ENCODE measurements at regions of chr3 and their contacts with region 1.

Region 1: DNA sequence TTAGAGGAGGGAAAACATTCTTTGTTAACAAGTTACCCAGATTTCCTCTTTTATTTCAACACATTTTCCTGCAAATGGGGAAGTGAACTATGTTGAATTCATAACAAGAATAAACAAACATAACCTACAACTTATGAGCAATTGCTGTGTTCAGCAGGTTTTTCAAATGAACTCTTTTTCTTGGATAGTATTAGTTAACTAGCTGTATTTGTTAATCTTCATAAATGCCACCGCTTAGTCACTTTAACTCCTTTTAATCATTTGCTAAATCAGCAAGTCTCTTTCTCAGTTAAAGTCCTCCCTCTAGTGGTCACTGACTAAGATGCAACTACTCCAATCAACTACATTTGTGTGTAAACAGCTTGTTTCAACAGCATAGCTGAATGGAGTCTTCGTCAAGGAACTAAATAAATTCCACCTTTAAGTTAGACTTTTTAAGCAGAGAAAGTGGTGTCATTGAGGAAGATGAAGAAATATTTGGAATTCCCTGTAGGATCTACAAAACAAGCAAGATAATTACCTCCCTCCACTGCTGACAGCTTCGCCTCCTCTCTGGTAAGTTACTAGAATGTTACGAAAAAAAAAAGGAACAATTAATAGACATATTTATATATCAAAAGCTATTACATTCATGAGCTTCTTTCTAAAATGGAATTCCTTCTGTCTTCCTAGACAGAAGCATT is 1122.0 kb downstream of the ROBO1 start:
- ATAC-seq: peak; percentile 38 to 60 (median 54)
- H3K4me3 ChIP-seq: no peak overlapping the region
- H3K27ac ChIP-seq: no peak overlapping the region
- H3K4me1 ChIP-seq: peaks cover 15 to 37% of the 10 kb centered on the region in 2 donors

Region 2: GRCh38 chr3:78029775-78030174 is 616.0 kb before region 1 on chr3:
- in situ Hi-C with region 1: no loop called
- ATAC-seq: no peak
- H3K4me3 ChIP-seq: no peak overlapping the region
- H3K27ac ChIP-seq: no peak overlapping the region
- H3K4me1 ChIP-seq: no peaks in the 10 kb centered on the region

Region 3: DNA sequence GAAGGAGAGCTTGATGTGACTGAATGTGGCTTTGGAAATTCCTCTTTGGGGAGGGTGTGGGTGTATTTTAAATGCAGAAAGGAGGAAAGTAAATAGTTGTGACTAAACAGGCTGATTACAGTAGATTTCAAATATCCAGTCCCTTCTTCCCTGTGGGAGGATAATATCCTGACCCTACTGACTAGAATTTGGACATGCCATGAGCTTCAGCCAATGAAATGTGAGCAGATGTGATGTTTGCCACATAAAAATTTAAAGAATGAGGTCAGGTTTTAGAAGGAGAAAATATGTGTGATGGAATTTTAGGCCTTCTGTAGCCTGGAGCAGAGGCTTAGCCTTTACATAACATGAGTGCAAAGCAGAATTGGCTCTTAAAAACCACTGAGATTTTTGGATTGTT is 387.0 kb before region 1 on chr3:
- in situ Hi-C with region 1: loop called in 1 of 9 experiments (anchors 25 kb)
- ATAC-seq: peak in 3 of 8 experiments; percentile 83 to 94 (median 87)
- H3K4me3 ChIP-seq: no peak overlapping the region
- H3K27ac ChIP-seq: no peak overlapping the region
- H3K4me1 ChIP-seq: peaks cover 0 to 12% of the 10 kb centered on the region in 2 donors